ENCODE measurements at regions of chr3 and their contacts with region 1.

Region 1: GRCh38 chr3:81249540-81250029 is 511.9 kb downstream of the GBE1 start:
- DNase-seq: peak; percentile 99
- ATAC-seq: peak; percentile 98
- H3K4me3 ChIP-seq: peak overlapping the region; percentile 26; the same call in 1 of the 2 replicates
- H3K27ac ChIP-seq: peak overlapping the region; percentile 60
- H3K4me1 ChIP-seq: peaks cover 23% of the 10 kb centered on the region
- H3K27me3 ChIP-seq: no peaks in the 10 kb centered on the region
- CTCF ChIP-seq: no peak

Region 2: DNA sequence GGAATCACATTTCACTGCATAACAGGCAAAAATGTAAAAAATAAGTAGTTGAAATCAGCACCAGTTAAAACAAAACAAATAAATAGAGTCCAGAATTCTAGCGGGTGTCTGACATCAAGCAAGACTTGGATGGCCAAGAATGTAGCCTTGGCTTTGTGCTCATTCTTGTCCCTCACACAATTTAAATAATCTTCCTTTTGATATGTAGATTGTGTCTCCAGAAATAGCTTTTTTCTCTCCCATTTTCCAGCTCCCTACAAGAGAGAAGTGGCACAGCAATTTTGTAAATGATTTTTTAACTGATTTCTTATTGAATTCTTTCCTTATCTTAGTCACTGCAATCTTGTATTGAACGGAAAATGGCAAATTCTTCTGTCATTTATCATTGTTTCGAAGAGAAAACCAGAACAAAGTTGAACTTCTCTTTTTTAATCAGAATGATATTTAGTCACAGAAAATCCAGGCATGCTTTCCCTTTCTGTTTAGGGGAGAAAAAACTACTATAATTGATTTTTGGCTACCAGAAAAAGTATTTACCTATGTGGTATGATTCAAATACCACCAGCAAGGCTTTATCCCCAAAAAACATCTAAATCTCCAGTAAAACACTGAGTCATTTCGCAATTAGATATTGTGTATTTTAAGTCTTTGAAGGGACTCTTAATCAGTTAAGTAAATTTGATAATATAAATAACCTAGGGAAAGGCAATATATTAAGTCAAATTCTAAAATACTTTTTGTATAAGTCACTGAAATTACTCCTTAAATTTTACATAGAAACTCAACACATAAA is 30.1 kb after region 1 on chr3:
- CTCF ChIA-PET with region 1: no interaction called
- POLR2A ChIA-PET with region 1: no interaction called
- intact Hi-C with region 1: loop called (anchors 1 kb)
- DNase-seq: peak; percentile 67
- ATAC-seq: peak; percentile 73
- H3K4me3 ChIP-seq: peak overlapping the region; percentile 32; the same call in 1 of the 2 replicates
- H3K27ac ChIP-seq: peak overlapping the region; percentile 27
- H3K4me1 ChIP-seq: peaks cover 25% of the 10 kb centered on the region
- H3K27me3 ChIP-seq: no peaks in the 10 kb centered on the region
- CTCF ChIP-seq: no peak